Dorsolateral prefrontal cortex (tissue), 120 donors: ENCODE measurements at regions of chr16 and their contacts with region 1.

Region 1: GRCh38 chr16:5509793-5510192 is 412.2 kb upstream of the EEF2KMT start:
- DNase-seq: peak in 1 of 10 donors; percentile 16
- H3K4me3 ChIP-seq: no peak overlapping the region
- H3K27ac ChIP-seq: no peak overlapping the region
- H3K27me3 ChIP-seq: peaks cover 0 to 14% (median 0%) of the 10 kb centered on the region in 45 donors
- CTCF ChIP-seq: no peak

Region 2: GRCh38 chr16:5598793-5599192 is 89.0 kb after region 1 on chr16:
- intact Hi-C with region 1: loop called in 1 of 2 experiments (anchors 5 kb)
- DNase-seq: no peak
- H3K4me3 ChIP-seq: no peak overlapping the region
- H3K27ac ChIP-seq: no peak overlapping the region
- H3K27me3 ChIP-seq: no peaks in the 10 kb centered on the region
- CTCF ChIP-seq: no peak